ENCODE measurements at regions of chr7 and their contacts with region 1.

Region 1: GRCh38 chr7:94301024-94301586 is 93.6 kb upstream of the COL1A2 start:
- DNase-seq: peak; percentile 67
- H3K4me3 ChIP-seq: no peak overlapping the region
- H3K27ac ChIP-seq: no peak overlapping the region
- H3K4me1 ChIP-seq: peaks cover 32% of the 10 kb centered on the region
- H3K27me3 ChIP-seq: no peaks in the 10 kb centered on the region
- CTCF ChIP-seq: no peak

Region 2: DNA sequence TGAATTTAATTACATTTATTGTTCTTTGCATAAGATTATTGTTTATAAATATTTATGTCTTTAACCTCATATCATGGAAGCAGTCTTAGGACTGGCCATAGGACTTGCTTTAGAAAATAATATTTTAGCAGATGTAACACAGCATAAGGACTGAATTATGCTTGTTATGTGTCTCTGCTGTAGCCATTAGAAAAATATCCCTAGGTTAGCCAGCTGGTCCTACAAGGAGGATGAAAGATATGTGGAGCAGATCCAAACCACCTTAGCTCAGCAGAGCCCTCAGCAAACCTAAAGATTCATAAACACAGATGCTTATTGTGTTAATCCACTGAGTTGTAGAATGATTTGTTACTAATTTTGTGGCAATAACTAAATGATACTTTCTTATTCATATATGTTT is 72.4 kb before region 1 on chr7:
- CTCF ChIA-PET with region 1: no interaction called
- POLR2A ChIA-PET with region 1: no interaction called
- intact Hi-C with region 1: no loop called
- DNase-seq: no peak
- H3K4me3 ChIP-seq: no peak overlapping the region
- H3K27ac ChIP-seq: no peak overlapping the region
- H3K4me1 ChIP-seq: peaks cover 41% of the 10 kb centered on the region
- H3K27me3 ChIP-seq: no peaks in the 10 kb centered on the region
- CTCF ChIP-seq: no peak

Region 3: DNA sequence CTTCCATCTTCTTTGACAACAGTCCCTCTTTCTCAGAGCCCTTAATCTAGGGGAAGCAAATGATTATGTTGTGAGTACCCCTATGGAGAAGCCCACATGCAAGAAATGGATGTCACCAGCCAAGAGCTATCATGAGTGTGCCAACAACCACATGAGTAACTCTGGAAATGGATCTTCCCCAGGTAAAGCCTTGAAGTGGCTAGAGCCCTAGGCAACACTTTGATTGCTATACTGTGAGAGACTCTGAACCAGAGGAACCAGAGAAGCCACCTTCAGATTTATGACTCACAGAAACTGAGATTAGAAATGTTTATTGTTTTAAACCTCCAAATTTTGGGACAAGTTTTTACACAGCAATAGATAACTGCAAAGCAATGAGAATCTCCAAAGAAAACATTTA is 32.7 kb after region 1 on chr7:
- CTCF ChIA-PET with region 1: no interaction called
- POLR2A ChIA-PET with region 1: no interaction called
- intact Hi-C with region 1: no loop called
- DNase-seq: no peak
- H3K4me3 ChIP-seq: no peak overlapping the region
- H3K27ac ChIP-seq: no peak overlapping the region
- H3K4me1 ChIP-seq: no peaks in the 10 kb centered on the region
- H3K27me3 ChIP-seq: no peaks in the 10 kb centered on the region
- CTCF ChIP-seq: no peak

Region 4: DNA sequence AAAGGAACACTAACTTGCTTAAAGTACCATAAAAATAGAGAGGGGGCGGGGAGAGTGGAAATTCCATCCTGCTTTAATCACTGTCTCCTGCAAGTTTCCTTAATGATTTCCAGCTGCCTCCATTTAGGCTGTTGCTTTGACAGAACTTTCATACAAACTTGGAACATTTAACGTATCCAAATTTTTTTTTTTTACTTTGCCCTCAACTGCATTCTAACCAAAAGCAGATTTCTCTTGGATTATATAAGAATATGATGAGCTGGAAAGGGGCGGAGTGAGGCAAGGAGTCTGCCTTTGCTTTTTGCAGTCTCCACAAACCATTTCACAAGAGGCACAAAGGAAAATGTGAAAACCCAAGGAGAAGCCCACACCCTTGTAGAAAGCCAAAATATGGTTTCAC is 47.0 kb after region 1 on chr7:
- CTCF ChIA-PET with region 1: interaction called, 6 read pairs
- POLR2A ChIA-PET with region 1: no interaction called
- intact Hi-C with region 1: loop called (anchors 5 kb)
- DNase-seq: peak; percentile 90
- H3K4me3 ChIP-seq: no peak overlapping the region
- H3K27ac ChIP-seq: peak overlapping the region; percentile 59
- H3K4me1 ChIP-seq: peaks cover 28% of the 10 kb centered on the region
- H3K27me3 ChIP-seq: no peaks in the 10 kb centered on the region
- CTCF ChIP-seq: no peak